A673 (cell line): ENCODE measurements at regions of chr6 and their contacts with region 1.

Region 1: DNA sequence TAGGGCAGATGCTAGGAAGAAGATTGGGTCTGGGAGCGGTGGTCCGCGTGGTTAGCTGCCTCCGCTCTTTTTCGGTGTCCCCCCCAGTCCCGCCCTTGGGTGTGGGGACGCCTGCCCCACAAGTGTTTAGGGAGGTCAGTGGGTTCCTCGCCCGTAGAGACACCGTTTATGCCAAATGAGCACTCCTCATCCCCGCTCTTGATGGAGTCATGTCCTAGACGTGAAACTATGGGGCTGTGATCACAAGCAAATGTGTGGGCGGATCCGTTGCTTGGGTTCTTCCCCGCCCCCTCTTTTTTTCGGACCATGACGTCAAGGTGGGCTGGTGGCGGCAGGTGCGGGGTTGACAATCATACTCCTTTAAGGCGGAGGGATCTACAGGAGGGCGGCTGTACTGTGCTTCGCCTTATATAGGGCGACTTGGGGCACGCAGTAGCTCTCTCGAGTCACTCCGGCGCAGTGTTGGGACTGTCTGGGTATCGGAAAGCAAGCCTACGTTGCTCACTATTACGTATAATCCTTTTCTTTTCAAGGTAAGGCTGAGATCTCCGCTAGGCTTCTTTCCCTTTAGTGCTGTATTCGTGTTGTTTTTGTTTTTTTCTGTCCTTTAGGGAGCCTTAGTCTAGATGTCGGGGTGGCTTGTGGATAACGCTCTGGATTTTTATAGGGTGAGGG is at the start of gene HSP90AB1:
- DNase-seq: peak; percentile 98
- H3K4me3 ChIP-seq: peak within 1 kb of the TSS; percentile 80
- H3K27ac ChIP-seq: peak within 1 kb of the TSS; percentile 95
- H3K4me1 ChIP-seq: peaks cover 20% of the 10 kb centered on the region
- H3K27me3 ChIP-seq: no peaks in the 10 kb centered on the region
- CTCF ChIP-seq: no peak
- total RNA-seq, gene HSP90AB1: 1,472 and 1,581 TPM in 2 replicates

Region 2: GRCh38 chr6:43887340-43887858 is 359.4 kb before region 1 on chr6:
- CTCF ChIA-PET with region 1: no interaction called
- POLR2A ChIA-PET with region 1: no interaction called
- intact Hi-C with region 1: no loop called
- DNase-seq: no peak
- H3K4me3 ChIP-seq: no peak overlapping the region
- H3K27ac ChIP-seq: no peak overlapping the region
- H3K4me1 ChIP-seq: no peaks in the 10 kb centered on the region
- H3K27me3 ChIP-seq: no peaks in the 10 kb centered on the region
- CTCF ChIP-seq: no peak

Region 3: DNA sequence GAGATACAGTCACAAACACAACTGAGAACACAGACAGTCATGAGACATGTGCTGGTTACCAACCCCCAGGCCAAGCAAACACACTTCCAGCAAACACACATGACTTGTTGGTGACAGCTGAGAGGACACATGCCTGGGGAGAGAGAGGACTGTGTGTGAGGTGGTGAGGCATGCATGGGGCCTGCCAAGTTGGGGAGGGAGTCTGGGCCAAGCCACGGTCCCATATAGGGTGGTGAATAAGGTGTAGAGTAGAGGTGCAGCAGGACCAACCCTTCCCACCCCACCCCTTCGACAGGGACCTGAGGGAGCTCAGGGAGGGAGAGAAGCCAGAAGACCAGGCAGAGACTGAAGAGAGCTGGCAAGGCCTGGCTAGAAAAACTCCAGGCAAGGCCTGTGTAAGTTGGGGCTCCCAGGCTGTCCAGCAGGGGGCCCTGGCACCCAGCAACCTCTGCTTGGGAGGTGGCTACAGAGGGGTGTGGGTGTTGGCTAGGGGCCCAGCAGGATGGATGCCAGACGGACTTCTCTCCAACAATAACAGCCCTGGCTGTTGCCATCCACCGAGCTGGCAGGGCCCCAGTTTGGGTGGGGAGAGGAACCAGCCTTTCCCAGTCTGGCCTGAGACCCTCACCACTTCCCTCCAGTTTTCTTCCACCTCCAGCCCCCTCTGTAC is 25.4 kb before region 1 on chr6:
- CTCF ChIA-PET with region 1: no interaction called
- POLR2A ChIA-PET with region 1: interaction called, 18 read pairs
- intact Hi-C with region 1: no loop called
- DNase-seq: peak; percentile 84
- H3K4me3 ChIP-seq: no peak overlapping the region
- H3K27ac ChIP-seq: peak overlapping the region; percentile 38
- H3K4me1 ChIP-seq: peaks cover 63% of the 10 kb centered on the region
- H3K27me3 ChIP-seq: no peaks in the 10 kb centered on the region
- CTCF ChIP-seq: peak; percentile 73